Gastrocnemius medialis (tissue), 4 donors: ENCODE measurements at regions of chr14 and their contacts with region 1.

Region 1: GRCh38 chr14:64855721-64856528 is 23.8 kb downstream of the SPTB start:
- DNase-seq: peak; percentile 59 to 76
- ATAC-seq: peak; percentile 53 to 59
- H3K4me3 ChIP-seq: no peak overlapping the region
- H3K27ac ChIP-seq: peak overlapping the region; percentile 82 to 99 (median 86)
- H3K4me1 ChIP-seq: peaks cover 64 to 71% of the 10 kb centered on the region in 2 donors
- H3K27me3 ChIP-seq: no peaks in the 10 kb centered on the region
- CTCF ChIP-seq: peak in 1 of 5 experiments; percentile 13
- POLR2A ChIP-seq: peak; percentile 40 to 41

Region 2: DNA sequence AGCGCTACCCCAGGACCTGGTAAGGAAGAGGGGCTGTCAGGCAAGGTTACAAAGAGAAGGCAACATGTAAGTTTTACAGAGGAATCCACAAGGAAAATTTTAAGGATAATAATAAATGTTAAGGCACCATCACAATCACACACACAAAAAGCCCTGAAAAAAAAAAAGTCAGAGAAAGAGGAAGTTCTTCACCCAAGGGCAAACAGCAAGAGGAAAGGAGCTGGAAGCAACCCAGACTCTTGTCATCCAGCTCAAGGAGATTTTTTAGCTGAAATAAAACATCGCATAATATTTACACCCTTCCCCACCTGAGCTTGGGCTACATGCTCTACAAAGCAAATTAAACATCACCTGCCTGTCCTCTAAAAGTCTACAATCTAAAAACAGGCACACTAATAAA is 14.2 kb after region 1 on chr14:
- in situ Hi-C with region 1: no loop called
- intact Hi-C with region 1: loop called (anchors 2 kb)
- DNase-seq: no peak
- ATAC-seq: no peak
- H3K4me3 ChIP-seq: no peak overlapping the region
- H3K27ac ChIP-seq: peak overlapping the region; percentile 98 to 100 (median 98)
- H3K4me1 ChIP-seq: peaks cover 77 to 96% of the 10 kb centered on the region in 2 donors
- H3K27me3 ChIP-seq: no peaks in the 10 kb centered on the region
- CTCF ChIP-seq: no peak
- POLR2A ChIP-seq: no peak

Region 3: GRCh38 chr14:64891839-64892375 is 36.0 kb after region 1 on chr14:
- in situ Hi-C with region 1: no loop called
- intact Hi-C with region 1: no loop called
- DNase-seq: no peak
- ATAC-seq: peak; percentile 98
- H3K4me3 ChIP-seq: no peak overlapping the region
- H3K27ac ChIP-seq: peak overlapping the region in 1 of 4 donors; percentile 18
- H3K4me1 ChIP-seq: peaks cover 0 to 12% of the 10 kb centered on the region in 2 donors
- H3K27me3 ChIP-seq: no peaks in the 10 kb centered on the region
- CTCF ChIP-seq: peak; percentile 60 to 84 (median 70)
- POLR2A ChIP-seq: no peak

Region 4: GRCh38 chr14:65042731-65043372 is 186.9 kb after region 1 on chr14:
- in situ Hi-C with region 1: no loop called
- intact Hi-C with region 1: no loop called
- DNase-seq: no peak
- ATAC-seq: no peak
- H3K4me3 ChIP-seq: no peak overlapping the region
- H3K27ac ChIP-seq: no peak overlapping the region
- H3K4me1 ChIP-seq: peaks cover 8 to 16% of the 10 kb centered on the region in 2 donors
- H3K27me3 ChIP-seq: no peaks in the 10 kb centered on the region
- CTCF ChIP-seq: no peak
- POLR2A ChIP-seq: no peak

Region 5: DNA sequence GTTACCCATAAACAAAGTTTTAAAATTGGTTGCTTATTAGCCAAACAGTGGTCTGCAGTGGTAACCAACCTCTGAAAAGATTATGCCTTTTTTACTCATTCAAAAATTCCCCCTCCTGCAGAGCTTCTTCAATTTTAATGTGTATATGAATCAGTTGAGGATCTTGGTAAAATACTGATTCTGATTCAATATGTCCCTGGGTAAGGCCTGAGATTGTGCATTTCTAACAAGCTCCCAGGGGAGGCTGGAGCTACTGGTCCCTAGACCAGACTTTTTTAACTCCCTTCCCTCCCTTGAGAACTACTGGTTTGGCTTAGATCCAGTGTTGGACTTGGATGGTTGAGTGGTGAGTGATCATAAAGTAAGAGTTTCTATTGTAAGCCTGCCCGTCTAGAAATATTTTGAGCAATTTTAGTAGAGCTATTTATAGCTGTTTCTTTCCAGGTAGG is 646.8 kb after region 1 on chr14:
- in situ Hi-C with region 1: no loop called
- intact Hi-C with region 1: no loop called
- DNase-seq: no peak
- ATAC-seq: no peak
- H3K4me3 ChIP-seq: no peak overlapping the region
- H3K27ac ChIP-seq: no peak overlapping the region
- H3K4me1 ChIP-seq: peaks cover 5% of the 10 kb centered on the region in 2 donors
- H3K27me3 ChIP-seq: no peaks in the 10 kb centered on the region
- CTCF ChIP-seq: no peak
- POLR2A ChIP-seq: no peak